A549 (cell line): ENCODE measurements at regions of chr3 and their contacts with region 1.

Region 1: GRCh38 chr3:48989796-48990635 is at the start of gene P4HTM:
- DNase-seq: peak in 1 of 2 experiments; percentile 82
- ATAC-seq: peak; percentile 79 to 89
- H3K4me3 ChIP-seq: peak within 1 kb of the TSS; percentile 92
- H3K27ac ChIP-seq: peak within 1 kb of the TSS; percentile 93 to 97
- H3K4me1 ChIP-seq: peaks cover 25% of the 10 kb centered on the region
- CTCF ChIP-seq: peak; percentile 30; the same call in 2 of the 3 replicates
- EP300 ChIP-seq: no peak
- POLR2A ChIP-seq: peak; percentile 40
- RAD21 ChIP-seq: peak in 1 of 2 experiments; percentile 20; a peak in 2 of 5 replicates
- polyA plus RNA-seq, gene P4HTM: 16.4 and 18.9 TPM in 2 replicates

Region 2: DNA sequence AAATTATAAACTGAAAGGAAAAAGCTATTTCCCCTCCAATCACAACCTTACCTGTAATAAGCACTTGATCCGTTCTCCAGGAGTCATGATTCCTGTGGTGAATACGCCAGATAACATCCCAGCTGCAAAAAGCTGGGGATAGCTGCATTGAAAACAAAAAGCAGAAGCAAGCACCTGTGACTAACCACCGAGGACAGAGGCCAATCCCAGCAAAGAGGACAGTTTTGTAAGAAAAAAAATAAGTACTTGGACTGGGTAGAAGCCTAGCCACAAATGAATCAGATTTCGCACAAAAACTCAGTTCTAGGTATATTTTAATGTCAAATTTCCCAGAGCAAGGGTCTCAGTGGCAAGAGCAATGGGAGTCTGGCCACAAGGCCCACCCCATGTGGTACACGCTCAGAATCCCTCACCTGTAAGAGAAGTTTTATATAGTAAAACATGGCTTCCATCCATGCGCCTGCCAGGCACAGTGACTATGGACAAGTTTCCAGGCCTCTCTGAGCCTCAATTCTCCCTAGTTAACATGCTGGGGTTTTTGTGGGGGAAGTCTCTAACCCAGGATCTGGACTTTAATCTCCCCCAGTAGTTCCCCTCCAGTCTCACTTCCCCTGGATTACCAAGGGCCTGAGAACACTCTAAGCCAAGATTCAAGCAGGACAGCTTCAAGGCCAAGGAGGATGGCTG is 110.6 kb before region 1 on chr3:
- CTCF ChIA-PET with region 1: no interaction called
- POLR2A ChIA-PET with region 1: no interaction called
- DNase-seq: no peak
- ATAC-seq: no peak; a peak in 1 of 6 replicates
- H3K4me3 ChIP-seq: no peak overlapping the region
- H3K27ac ChIP-seq: no peak overlapping the region
- H3K4me1 ChIP-seq: no peaks in the 10 kb centered on the region
- CTCF ChIP-seq: no peak
- EP300 ChIP-seq: no peak
- POLR2A ChIP-seq: no peak
- RAD21 ChIP-seq: no peak

Region 3: GRCh38 chr3:48974076-48974864 is 15.7 kb before region 1 on chr3:
- CTCF ChIA-PET with region 1: interaction called, 10 read pairs
- POLR2A ChIA-PET with region 1: no interaction called
- DNase-seq: no peak
- ATAC-seq: no peak
- H3K4me3 ChIP-seq: no peak overlapping the region
- H3K27ac ChIP-seq: no peak overlapping the region
- H3K4me1 ChIP-seq: no peaks in the 10 kb centered on the region
- CTCF ChIP-seq: no peak
- EP300 ChIP-seq: no peak
- POLR2A ChIP-seq: no peak
- RAD21 ChIP-seq: no peak

Region 4: DNA sequence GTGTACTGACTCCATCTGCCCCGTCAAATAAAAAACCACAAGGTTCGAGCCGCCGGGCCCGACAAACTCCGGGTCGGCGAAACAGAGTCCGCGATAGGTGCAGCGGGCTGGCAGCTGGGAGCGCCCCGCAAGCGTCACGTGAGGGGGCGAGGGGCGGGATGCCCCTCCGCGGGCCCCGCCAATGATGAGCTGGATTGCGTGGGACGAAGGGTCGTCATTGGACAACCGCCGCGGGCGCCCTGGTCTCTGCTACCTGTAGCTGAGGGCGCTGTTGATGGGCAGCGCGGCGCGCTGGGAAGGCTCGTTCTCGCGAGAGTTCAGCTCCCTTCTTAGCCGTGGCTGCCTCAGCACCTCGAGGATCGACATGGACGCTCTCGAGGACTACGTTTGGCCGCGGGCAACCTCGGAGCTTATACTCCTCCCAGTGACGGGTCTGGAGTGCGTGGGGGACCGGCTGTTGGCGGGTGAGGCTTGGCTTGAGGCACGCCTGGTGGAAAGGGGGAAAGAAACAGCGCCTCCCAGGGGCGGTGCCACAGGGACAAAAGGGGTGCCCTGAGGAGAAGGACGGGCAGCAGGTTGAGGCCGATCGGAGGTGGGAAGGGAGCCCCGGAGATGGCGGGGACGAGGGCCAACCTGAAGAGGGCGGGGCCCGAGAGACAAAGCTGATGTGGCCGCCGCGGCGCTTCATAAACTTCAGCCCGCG is 17.2 kb after region 1 on chr3 and contains the start of gene WDR6:
- CTCF ChIA-PET with region 1: interaction called, 385 read pairs
- POLR2A ChIA-PET with region 1: interaction called, 24 read pairs
- DNase-seq: peak; percentile 91 to 96
- ATAC-seq: peak; percentile 83 to 94
- H3K4me3 ChIP-seq: peak within 1 kb of the TSS; percentile 100
- H3K27ac ChIP-seq: peak within 1 kb of the TSS; percentile 98 to 100
- H3K4me1 ChIP-seq: peaks cover 21% of the 10 kb centered on the region; the same call in 2 of the 3 replicates
- CTCF ChIP-seq: peak; percentile 13; the same call in 2 of the 3 replicates
- EP300 ChIP-seq: no peak
- POLR2A ChIP-seq: peak; percentile 64
- RAD21 ChIP-seq: no peak
- polyA plus RNA-seq, gene WDR6: 64.2 and 80.5 TPM in 2 replicates

Region 5: DNA sequence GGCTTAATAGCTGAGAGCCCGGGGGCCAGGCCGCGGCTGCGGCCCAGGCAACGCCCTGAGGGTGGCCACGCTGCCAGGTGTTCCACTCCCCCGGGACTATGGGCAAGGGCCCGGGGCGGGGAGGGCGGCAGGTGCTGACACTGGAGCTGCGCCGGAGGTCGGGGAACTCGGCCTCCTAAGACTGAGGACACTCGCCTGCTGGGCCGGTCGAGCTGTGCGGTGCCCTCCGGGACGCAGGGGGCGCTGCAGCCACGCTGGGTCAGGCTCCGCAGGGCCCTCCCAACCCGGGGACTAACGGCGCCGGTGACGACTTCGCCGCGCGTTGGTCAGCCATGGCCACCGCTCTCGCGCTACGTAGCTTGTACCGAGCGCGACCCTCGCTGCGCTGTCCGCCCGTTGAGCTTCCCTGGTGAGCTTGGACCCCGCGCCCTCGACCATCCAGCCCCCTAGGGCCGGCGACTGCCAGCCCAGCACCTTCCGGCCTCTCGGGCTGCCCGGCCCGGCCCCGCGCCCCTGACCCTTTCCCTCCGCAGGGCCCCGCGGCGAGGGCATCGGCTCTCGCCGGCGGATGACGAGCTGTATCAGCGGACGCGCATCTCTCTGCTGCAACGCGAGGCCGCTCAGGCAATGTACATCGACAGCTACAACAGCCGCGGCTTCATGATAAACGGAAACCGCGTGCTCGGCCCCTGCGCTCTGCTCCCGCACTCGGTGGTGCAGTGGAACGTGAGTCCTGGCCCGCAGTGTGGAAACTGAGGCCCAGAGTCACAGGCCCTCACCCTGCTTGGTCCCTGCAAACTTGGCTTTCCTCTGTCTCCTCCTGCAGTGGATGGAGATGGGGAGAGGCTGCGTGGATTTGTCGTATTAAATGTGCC is 32.0 kb after region 1 on chr3 and contains the start of gene NDUFAF3:
- CTCF ChIA-PET with region 1: interaction called, 385 read pairs
- POLR2A ChIA-PET with region 1: interaction called, 14 read pairs
- DNase-seq: peak; percentile 63 to 96
- ATAC-seq: peak; percentile 69 to 83
- H3K4me3 ChIP-seq: peak within 1 kb of the TSS; percentile 76
- H3K27ac ChIP-seq: peak within 1 kb of the TSS; percentile 98 to 100
- H3K4me1 ChIP-seq: peaks cover 26% of the 10 kb centered on the region
- CTCF ChIP-seq: peak; percentile 71
- EP300 ChIP-seq: no peak
- POLR2A ChIP-seq: peak; percentile 93
- RAD21 ChIP-seq: no peak
- polyA plus RNA-seq, gene NDUFAF3: 44.3 and 46.5 TPM in 2 replicates

Region 6: GRCh38 chr3:49028673-49029562 is 38.9 kb after region 1 on chr3 and contains the start of gene IMPDH2:
- CTCF ChIA-PET with region 1: interaction called, 385 read pairs
- POLR2A ChIA-PET with region 1: interaction called, 10 read pairs
- DNase-seq: peak; percentile 47 to 91
- ATAC-seq: peak; percentile 83 to 88
- H3K4me3 ChIP-seq: peak within 1 kb of the TSS; percentile 81
- H3K27ac ChIP-seq: peak within 1 kb of the TSS; percentile 90 to 91
- H3K4me1 ChIP-seq: peaks cover 14% of the 10 kb centered on the region
- CTCF ChIP-seq: no peak
- EP300 ChIP-seq: no peak
- POLR2A ChIP-seq: peak; percentile 100
- RAD21 ChIP-seq: no peak
- polyA plus RNA-seq, gene IMPDH2: 212 and 222 TPM in 2 replicates